GM12878 (cell line): ENCODE measurements at regions of chr15 and their contacts with region 1.

Region 1: GRCh38 chr15:75023181-75023871 is at the start of gene PPCDC:
- DNase-seq: peak; percentile 84
- ATAC-seq: peak; percentile 99
- H3K4me3 ChIP-seq: peak within 1 kb of the TSS; percentile 86
- H3K27ac ChIP-seq: peak within 1 kb of the TSS; percentile 98
- H3K4me1 ChIP-seq: peaks cover 16% of the 10 kb centered on the region
- H3K27me3 ChIP-seq: no peaks in the 10 kb centered on the region
- CTCF ChIP-seq: no peak
- EP300 ChIP-seq: no peak
- POLR2A ChIP-seq: peak; percentile 99
- RAD21 ChIP-seq: no peak
- polyA plus RNA-seq, gene PPCDC: 92.0 to 135 TPM

Region 2: DNA sequence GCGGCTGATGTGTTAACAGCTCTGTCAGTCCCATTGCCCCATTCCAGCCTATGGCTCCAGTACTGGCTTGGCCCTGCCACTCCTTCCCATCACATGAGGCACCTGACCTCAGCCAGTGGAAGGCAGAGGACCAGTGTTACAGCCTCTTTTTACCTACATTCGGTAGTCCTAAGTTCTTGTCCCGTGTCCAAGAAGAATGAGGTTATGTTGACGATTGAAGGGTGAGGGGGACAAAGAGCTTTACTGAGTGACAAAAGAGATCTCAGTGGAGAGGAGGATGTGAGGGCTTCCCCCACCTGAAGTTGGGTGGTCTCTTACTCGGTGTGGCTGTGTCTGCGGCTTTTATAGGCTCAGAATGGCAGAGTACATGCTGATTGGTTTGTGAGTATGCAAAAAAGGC is 140.8 kb before region 1 on chr15:
- CTCF ChIA-PET with region 1: no interaction called
- POLR2A ChIA-PET with region 1: no interaction called
- RAD21 ChIA-PET with region 1: no interaction called
- SMC1A ChIA-PET with region 1: no interaction called
- in situ Hi-C with region 1: no loop called
- intact Hi-C with region 1: no loop called
- DNase-seq: no peak
- ATAC-seq: no peak
- H3K4me3 ChIP-seq: no peak overlapping the region
- H3K27ac ChIP-seq: no peak overlapping the region
- H3K4me1 ChIP-seq: peaks cover 12% of the 10 kb centered on the region
- H3K27me3 ChIP-seq: no peaks in the 10 kb centered on the region
- CTCF ChIP-seq: no peak
- EP300 ChIP-seq: no peak
- POLR2A ChIP-seq: no peak
- RAD21 ChIP-seq: no peak

Region 3: DNA sequence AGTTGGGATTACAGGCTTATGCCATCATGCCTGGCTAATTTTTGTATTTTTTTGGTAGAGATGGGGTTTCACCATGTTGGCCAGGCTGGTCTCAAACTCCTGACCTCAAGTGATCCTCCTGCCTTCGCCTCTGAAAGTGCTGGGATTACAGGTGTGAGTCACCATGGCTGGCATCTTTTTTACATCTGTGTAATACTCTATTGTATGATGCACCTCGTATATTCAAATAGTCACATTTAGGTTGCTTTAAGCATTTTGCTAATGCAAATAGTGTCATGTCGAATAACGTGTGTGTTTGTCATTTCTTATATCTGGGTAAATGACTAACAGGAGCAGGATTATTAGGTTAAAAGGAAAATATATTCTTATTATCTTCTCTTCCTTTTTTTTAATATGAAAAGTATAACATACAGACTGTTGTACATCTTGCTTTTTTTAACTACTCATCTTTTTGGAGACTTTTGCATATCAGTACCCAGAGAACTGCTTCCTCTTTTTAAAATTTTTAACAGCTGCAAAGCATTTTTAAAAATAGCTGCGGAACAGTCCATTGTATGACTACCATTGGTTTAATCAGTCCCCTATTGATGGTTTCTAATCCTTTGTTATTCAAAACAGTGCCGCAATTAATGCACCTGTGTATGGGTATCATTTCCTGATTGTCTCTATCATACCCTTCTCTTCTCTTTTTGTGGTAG is 14.5 kb before region 1 on chr15:
- CTCF ChIA-PET with region 1: interaction called, 6 read pairs
- POLR2A ChIA-PET with region 1: interaction called, 5 read pairs
- RAD21 ChIA-PET with region 1: interaction called, 20 read pairs
- SMC1A ChIA-PET with region 1: interaction called, 15 read pairs
- in situ Hi-C with region 1: no loop called
- intact Hi-C with region 1: no loop called
- DNase-seq: peak; percentile 83
- ATAC-seq: peak; percentile 89
- H3K4me3 ChIP-seq: peak overlapping the region; percentile 34; the same call in 1 of the 2 replicates
- H3K27ac ChIP-seq: peak overlapping the region; percentile 93
- H3K4me1 ChIP-seq: peaks cover 28% of the 10 kb centered on the region
- H3K27me3 ChIP-seq: no peaks in the 10 kb centered on the region
- CTCF ChIP-seq: no peak
- EP300 ChIP-seq: peak; percentile 50 to 75; a peak in 3 of 4 replicates
- POLR2A ChIP-seq: no peak
- RAD21 ChIP-seq: no peak

Region 4: DNA sequence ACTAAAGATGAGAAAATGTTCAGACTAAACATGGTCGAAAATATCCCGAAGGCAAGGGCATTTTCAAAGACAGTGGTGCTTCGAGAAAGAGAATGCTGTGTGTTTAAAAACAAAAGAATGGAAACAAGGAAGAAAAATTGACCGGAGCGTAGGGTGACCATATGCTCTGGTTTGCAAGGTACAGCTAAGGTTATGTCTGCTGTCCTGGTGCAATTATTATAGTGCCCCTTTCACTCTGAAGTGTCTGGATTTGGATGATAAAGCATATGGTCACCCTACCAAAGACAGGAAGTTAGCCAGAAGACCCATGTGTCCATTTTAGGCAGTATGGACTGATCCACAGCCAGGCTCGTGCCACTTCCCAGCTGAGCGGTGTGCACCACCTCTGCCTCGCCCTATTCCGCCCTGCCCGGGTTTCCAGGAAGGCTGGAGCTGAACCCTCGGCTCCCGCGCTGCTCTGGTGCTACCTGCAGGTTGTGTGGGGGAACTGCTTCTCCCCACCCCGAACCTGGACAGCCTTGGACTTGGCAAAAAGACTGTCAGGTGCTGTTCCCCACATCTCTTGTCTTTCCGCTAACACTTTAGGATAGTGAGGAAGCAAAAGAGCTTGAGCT is 284.6 kb after region 1 on chr15:
- CTCF ChIA-PET with region 1: no interaction called
- POLR2A ChIA-PET with region 1: no interaction called
- RAD21 ChIA-PET with region 1: no interaction called
- SMC1A ChIA-PET with region 1: no interaction called
- in situ Hi-C with region 1: loop called (anchors 10 kb)
- intact Hi-C with region 1: no loop called
- DNase-seq: no peak
- ATAC-seq: peak; percentile 91
- H3K4me3 ChIP-seq: no peak overlapping the region
- H3K27ac ChIP-seq: no peak overlapping the region
- H3K4me1 ChIP-seq: no peaks in the 10 kb centered on the region
- H3K27me3 ChIP-seq: no peaks in the 10 kb centered on the region
- CTCF ChIP-seq: peak; percentile 44 to 64 (median 53); a peak in 5 of 6 replicates
- EP300 ChIP-seq: no peak
- POLR2A ChIP-seq: no peak
- RAD21 ChIP-seq: peak; percentile 55

Region 5: GRCh38 chr15:75661091-75661777 is 637.9 kb after region 1 on chr15:
- CTCF ChIA-PET with region 1: no interaction called
- POLR2A ChIA-PET with region 1: no interaction called
- RAD21 ChIA-PET with region 1: no interaction called
- SMC1A ChIA-PET with region 1: no interaction called
- in situ Hi-C with region 1: loop called (anchors 25 kb)
- intact Hi-C with region 1: no loop called
- DNase-seq: no peak
- ATAC-seq: no peak
- H3K4me3 ChIP-seq: no peak overlapping the region
- H3K27ac ChIP-seq: no peak overlapping the region
- H3K4me1 ChIP-seq: no peaks in the 10 kb centered on the region; the same call in 1 of the 2 replicates
- H3K27me3 ChIP-seq: no peaks in the 10 kb centered on the region
- CTCF ChIP-seq: no peak
- EP300 ChIP-seq: no peak
- POLR2A ChIP-seq: no peak
- RAD21 ChIP-seq: no peak